Tibial artery (tissue), 4 donors: ENCODE measurements at regions of chr7 and their contacts with region 1.

Region 1: GRCh38 chr7:104883718-104884452 is 130.1 kb upstream of the KMT2E start:
- DNase-seq: peak; percentile 88 to 91
- H3K4me3 ChIP-seq: peak overlapping the region; percentile 1 to 13
- H3K27ac ChIP-seq: peak overlapping the region; percentile 69 to 80
- H3K4me1 ChIP-seq: peaks cover 0 to 18% (median 8%) of the 10 kb centered on the region in 4 donors
- H3K27me3 ChIP-seq: no peaks in the 10 kb centered on the region
- CTCF ChIP-seq: peak; percentile 87 to 90

Region 2: DNA sequence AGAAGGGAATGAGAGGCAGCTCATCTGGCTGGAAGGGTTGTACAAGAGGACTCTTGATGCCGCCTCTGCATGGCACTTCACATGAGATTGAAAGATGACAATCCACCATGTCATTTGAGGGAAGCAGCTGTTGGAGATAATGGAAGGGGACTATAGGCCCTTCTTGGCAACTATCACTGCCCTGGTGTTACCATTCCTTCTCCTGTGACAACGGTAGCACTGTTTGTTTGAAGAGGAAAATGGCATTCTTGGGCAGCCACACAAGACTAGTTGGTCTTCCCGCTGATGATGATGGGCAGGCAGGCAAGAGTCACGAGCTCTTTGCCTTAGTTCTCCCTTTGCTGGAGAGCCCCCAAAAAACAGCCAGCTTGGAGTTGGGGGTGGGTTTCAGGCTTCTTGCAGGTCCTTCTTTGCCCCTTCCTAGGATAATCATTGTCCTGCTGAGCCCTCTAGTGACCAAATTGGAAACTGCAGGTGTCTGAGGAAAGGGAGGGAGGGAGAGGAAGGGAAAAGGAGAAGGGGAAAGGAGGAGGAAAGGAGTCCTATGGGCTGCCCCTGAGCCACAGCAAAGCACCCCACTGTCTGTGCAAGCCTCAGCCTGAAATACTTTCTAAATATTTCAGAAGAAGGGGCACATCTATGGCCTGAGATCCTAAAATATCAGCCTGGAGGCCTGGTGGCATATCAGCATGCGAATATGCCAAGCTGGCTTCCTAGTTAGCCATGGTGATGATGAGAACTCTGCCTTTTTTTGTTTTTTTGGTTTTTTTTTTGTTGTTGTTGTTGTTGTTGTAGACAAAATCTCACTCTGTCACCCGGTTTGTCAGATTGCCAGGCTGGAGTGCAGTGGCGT is 35.5 kb before region 1 on chr7:
- intact Hi-C with region 1: no loop called
- DNase-seq: peak in 1 of 2 donors; percentile 63
- H3K4me3 ChIP-seq: no peak overlapping the region
- H3K27ac ChIP-seq: no peak overlapping the region
- H3K4me1 ChIP-seq: no peaks in the 10 kb centered on the region
- H3K27me3 ChIP-seq: peaks cover 0 to 12% of the 10 kb centered on the region in 2 donors
- CTCF ChIP-seq: peak; percentile 70 to 77

Region 3: GRCh38 chr7:104922182-104923009 is 38.5 kb after region 1 on chr7:
- intact Hi-C with region 1: loop called (anchors 2 kb)
- DNase-seq: no peak
- H3K4me3 ChIP-seq: no peak overlapping the region
- H3K27ac ChIP-seq: peak overlapping the region; percentile 53 to 66
- H3K4me1 ChIP-seq: peaks cover 0 to 17% (median 7%) of the 10 kb centered on the region in 4 donors
- H3K27me3 ChIP-seq: no peaks in the 10 kb centered on the region
- CTCF ChIP-seq: no peak